MCF 10A (cell line): ENCODE measurements at regions of chr2 and their contacts with region 1.

Region 1: GRCh38 chr2:30178618-30179434 is 32.0 kb downstream of the YPEL5 start:
- DNase-seq: peak; percentile 96
- H3K4me3 Mint-ChIP-seq: no peak overlapping the region
- H3K27ac Mint-ChIP-seq: peak overlapping the region; percentile 87
- H3K4me1 Mint-ChIP-seq: peaks cover 28% of the 10 kb centered on the region
- H3K27me3 Mint-ChIP-seq: no peaks in the 10 kb centered on the region
- CTCF ChIP-seq: no peak

Region 2: DNA sequence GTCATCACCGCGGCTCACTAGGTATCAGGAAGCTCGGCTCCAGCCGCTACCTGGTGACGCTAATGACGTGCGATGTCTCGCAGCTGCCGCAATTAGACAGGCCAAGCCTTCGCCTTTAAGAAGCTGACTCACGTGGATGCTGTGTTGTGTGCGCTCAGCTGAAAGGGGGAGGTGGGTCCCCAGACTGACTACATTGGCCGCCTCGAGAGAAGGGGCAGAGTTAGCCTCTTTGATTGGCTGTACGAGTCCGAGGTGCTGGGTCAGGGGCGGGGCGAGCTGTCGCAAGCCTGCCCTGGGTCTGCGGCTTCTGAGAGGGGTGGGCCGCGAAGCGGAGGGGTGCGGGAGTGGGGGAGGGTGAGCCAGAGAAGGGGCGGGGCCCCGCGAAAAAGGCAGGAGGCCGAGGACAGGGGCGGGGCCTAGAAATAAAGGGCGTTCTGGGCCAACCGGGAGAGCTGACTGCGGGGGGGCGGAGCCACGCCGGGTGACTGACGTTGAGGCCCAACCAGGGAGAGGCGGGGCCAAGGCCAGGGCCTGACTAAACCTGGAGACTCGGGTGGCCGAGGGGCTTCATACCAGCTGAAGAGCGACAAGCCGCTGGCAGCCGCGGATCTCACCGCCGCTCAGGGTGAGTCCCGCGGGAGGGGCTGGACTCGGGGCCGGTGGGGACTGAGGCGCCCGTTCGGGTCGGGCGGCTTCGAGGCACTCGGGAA is 32.2 kb before region 1 on chr2 and contains the start of gene YPEL5:
- CTCF ChIA-PET with region 1: interaction called, 3 read pairs
- POLR2A ChIA-PET with region 1: interaction called, 13 read pairs
- intact Hi-C with region 1: no loop called
- DNase-seq: peak; percentile 99
- H3K4me3 Mint-ChIP-seq: peak within 1 kb of the TSS; percentile 77
- H3K27ac Mint-ChIP-seq: peak within 1 kb of the TSS; percentile 95
- H3K4me1 Mint-ChIP-seq: peaks cover 29% of the 10 kb centered on the region
- H3K27me3 Mint-ChIP-seq: no peaks in the 10 kb centered on the region
- CTCF ChIP-seq: no peak
- total RNA-seq, gene YPEL5: 62.5 and 80.6 TPM in 2 replicates

Region 3: GRCh38 chr2:30436859-30437435 is 258.1 kb after region 1 on chr2:
- CTCF ChIA-PET with region 1: no interaction called
- POLR2A ChIA-PET with region 1: no interaction called
- intact Hi-C with region 1: no loop called
- DNase-seq: no peak
- H3K4me3 Mint-ChIP-seq: no peak overlapping the region
- H3K27ac Mint-ChIP-seq: no peak overlapping the region
- H3K4me1 Mint-ChIP-seq: no peaks in the 10 kb centered on the region
- H3K27me3 Mint-ChIP-seq: no peaks in the 10 kb centered on the region
- CTCF ChIP-seq: no peak